Stomach (tissue), 19 donors: ENCODE measurements at regions of chr10 and their contacts with region 1.

Region 1: DNA sequence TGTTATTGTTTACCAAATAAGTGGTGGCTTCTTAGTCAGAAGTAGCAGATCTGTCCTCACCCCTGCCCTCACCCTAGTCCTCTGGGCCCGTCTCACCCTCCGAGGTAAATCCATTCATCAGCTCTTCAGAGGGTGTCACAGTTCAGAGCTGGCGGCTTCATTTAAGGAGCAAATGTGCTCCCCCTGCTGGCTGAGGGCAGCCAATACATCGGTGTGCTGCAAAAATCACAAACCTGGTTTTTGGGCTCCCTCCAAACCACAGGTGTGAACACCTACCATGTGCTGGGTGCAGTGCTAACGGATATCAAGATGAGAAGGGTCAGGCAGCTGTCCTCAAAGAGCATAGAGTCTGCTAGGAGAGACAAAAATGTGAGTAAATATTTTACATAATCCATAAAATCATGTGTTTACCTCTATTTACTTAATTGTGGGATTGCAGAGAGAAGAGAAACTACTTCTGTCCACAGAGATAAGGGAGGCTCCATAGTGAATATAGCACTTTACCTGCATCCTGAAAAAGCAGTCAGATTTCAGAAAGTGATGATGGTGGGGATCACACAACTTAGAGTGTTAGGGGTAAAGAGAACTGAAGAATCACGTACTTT is 15.5 kb upstream of the CRTAC1 start:
- DNase-seq: peak; percentile 65 to 78
- H3K4me3 ChIP-seq: no peak overlapping the region
- H3K27ac ChIP-seq: no peak overlapping the region
- H3K4me1 ChIP-seq: no peaks in the 10 kb centered on the region
- H3K27me3 ChIP-seq: peaks cover 0 to 46% (median 17%) of the 10 kb centered on the region in 3 donors
- CTCF ChIP-seq: peak in 5 of 7 experiments; percentile 66 to 84 (median 80)
- EP300 ChIP-seq: no peak
- POLR2A ChIP-seq: no peak

Region 2: DNA sequence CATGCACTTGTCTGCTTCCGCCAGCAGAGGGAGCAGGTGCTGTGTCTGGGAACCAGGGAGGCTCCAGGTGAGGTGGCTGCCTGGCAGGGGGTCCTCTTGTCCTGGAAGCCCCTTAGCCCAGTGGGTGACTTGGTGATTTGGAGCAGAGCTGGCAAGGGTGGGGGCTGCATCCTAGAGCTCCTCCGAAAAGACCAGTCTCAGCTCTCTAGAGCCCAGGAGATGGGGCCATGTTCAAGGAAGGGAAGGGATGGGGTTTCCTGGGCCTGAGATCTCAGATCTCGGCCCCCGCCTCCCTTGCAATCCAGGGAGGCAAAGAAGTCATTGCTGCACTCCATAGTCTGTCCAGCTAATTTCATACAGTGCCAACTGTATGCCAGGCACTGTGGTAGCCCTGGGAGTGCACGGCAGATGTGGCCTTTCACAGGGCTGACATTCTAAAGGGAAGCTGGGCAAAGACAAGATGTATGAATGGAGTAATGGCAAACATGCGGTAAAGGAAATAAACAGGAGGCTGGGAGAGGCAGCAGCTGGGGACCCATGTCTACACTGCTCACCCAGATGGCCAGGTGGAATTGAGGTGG is 253.7 kb before region 1 on chr10:
- intact Hi-C with region 1: loop called (anchors 10 kb)
- DNase-seq: peak; percentile 75 to 85
- H3K4me3 ChIP-seq: no peak overlapping the region
- H3K27ac ChIP-seq: no peak overlapping the region
- H3K4me1 ChIP-seq: peaks cover 0 to 21% (median 12%) of the 10 kb centered on the region in 4 donors
- H3K27me3 ChIP-seq: peaks cover 0 to 49% (median 3%) of the 10 kb centered on the region in 3 donors
- CTCF ChIP-seq: peak in 4 of 7 experiments; percentile 72 to 87 (median 78)
- EP300 ChIP-seq: no peak
- POLR2A ChIP-seq: no peak

Region 3: GRCh38 chr10:97914837-97915211 is 131.1 kb before region 1 on chr10:
- intact Hi-C with region 1: loop called (anchors 5 kb)
- DNase-seq: peak; percentile 86 to 89
- H3K4me3 ChIP-seq: peak overlapping the region in 1 of 4 donors; percentile 1
- H3K27ac ChIP-seq: no peak overlapping the region
- H3K4me1 ChIP-seq: peaks cover 4 to 22% (median 13%) of the 10 kb centered on the region in 4 donors
- H3K27me3 ChIP-seq: peaks cover 0 to 59% (median 0%) of the 10 kb centered on the region in 3 donors
- CTCF ChIP-seq: peak in 5 of 7 experiments; percentile 72 to 87 (median 85)
- EP300 ChIP-seq: no peak
- POLR2A ChIP-seq: no peak

Region 4: GRCh38 chr10:98160026-98160425 is 114.1 kb after region 1 on chr10:
- intact Hi-C with region 1: no loop called
- DNase-seq: no peak
- H3K4me3 ChIP-seq: no peak overlapping the region
- H3K27ac ChIP-seq: no peak overlapping the region
- H3K4me1 ChIP-seq: peaks cover 0 to 6% (median under 1%) of the 10 kb centered on the region in 4 donors
- H3K27me3 ChIP-seq: no peaks in the 10 kb centered on the region
- CTCF ChIP-seq: no peak
- EP300 ChIP-seq: no peak
- POLR2A ChIP-seq: no peak